Activated T-helper 1 cell treated with anti-CD3 and anti-CD28 coated beads, Interleukin-12 subunit alpha, Interleukin-12 subunit beta, Interleukin-2, Interleukin-4 antibody, amounts not matched to agents 30 ng/mL and 10 ng/mL and 1 ng/mL, durations not matched to agents 14 hours and 24 hours and 36 hours (primary cell): ENCODE measurements at regions of chr7 and their contacts with region 1.

Region 1: GRCh38 chr7:40134428-40135316 is at the starts of genes MPLKIP and SUGCT:
- DNase-seq: peak; percentile 80
- H3K4me3 Mint-ChIP-seq: peak within 1 kb of the TSS; percentile 91
- H3K27ac Mint-ChIP-seq: peak within 1 kb of the TSS; percentile 96
- H3K4me1 Mint-ChIP-seq: peaks cover 19% of the 10 kb centered on the region
- H3K27me3 Mint-ChIP-seq: peaks cover 13% of the 10 kb centered on the region
- total RNA-seq, gene MPLKIP: 36.0 and 36.3 TPM in 2 replicates
- total RNA-seq, gene SUGCT: 0.93 TPM in 1 of 2 replicates, not detected in the other

Region 2: GRCh38 chr7:38178004-38178694 is 1956.5 kb before region 1 on chr7 and contains the start of gene STARD3NL:
- intact Hi-C with region 1: loop called (anchors 10 kb)
- DNase-seq: peak; percentile 90
- H3K4me3 Mint-ChIP-seq: peak within 1 kb of the TSS; percentile 94
- H3K27ac Mint-ChIP-seq: peak within 1 kb of the TSS; percentile 87
- H3K4me1 Mint-ChIP-seq: peaks cover 46% of the 10 kb centered on the region
- H3K27me3 Mint-ChIP-seq: no peaks in the 10 kb centered on the region
- total RNA-seq, gene STARD3NL: 28.5 and 31.5 TPM in 2 replicates

Region 3: DNA sequence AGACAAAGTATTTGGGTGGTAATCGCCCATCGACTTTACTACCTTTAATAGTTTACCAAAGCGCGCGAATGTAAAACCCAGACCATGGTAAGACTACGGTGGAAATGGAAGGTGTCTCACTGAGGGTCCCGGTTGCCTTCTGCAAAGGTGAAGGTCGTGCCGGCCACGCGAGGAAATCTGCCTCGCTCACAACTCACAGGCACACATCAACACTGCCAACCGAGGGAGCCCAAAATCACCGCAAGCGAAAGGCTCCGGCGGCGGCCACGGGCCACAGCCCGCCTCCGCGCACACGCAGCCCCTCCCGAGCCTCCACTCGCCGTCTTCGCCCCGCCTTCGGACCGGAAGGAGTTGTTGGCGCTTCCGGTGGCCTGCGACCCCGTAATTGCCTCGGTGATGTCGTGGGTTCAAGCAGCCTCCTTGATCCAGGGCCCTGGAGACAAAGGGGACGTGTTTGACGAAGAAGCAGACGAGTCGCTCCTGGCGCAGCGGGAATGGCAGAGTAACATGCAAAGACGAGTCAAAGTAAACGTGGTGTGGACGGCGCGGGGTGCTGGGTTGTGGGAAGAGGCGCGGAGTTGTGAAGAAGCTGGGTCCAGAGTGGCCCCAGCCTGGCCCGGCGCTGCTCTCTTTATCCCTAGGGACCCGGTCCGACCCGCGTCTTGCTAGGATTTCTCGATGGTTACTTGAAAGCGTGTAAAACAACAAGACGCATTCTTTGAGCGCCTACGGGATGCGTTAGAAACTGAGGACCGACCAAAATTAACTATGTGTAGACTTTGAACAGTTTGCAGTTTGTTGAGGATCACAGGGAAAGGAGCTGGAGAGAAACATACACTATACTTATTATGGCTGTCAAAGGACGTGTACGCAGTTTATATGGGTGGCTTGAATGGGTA is 568.4 kb before region 1 on chr7 and contains the start of gene YAE1:
- intact Hi-C with region 1: loop called (anchors 2 kb)
- DNase-seq: peak; percentile 73
- H3K4me3 Mint-ChIP-seq: peak within 1 kb of the TSS; percentile 99
- H3K27ac Mint-ChIP-seq: peak within 1 kb of the TSS; percentile 91
- H3K4me1 Mint-ChIP-seq: peaks cover 21% of the 10 kb centered on the region
- H3K27me3 Mint-ChIP-seq: peaks cover 9% of the 10 kb centered on the region
- total RNA-seq, gene YAE1: 10.4 and 12.1 TPM in 2 replicates

Region 4: GRCh38 chr7:39623018-39623731 is 511.5 kb before region 1 on chr7 and contains the start of gene RALA:
- intact Hi-C with region 1: loop called (anchors 1 kb)
- DNase-seq: peak; percentile 87
- H3K4me3 Mint-ChIP-seq: peak within 1 kb of the TSS; percentile 95
- H3K27ac Mint-ChIP-seq: peak within 1 kb of the TSS; percentile 97
- H3K4me1 Mint-ChIP-seq: peaks cover 52% of the 10 kb centered on the region
- H3K27me3 Mint-ChIP-seq: peaks cover 7% of the 10 kb centered on the region
- total RNA-seq, gene RALA: 38.8 and 43.4 TPM in 2 replicates

Region 5: DNA sequence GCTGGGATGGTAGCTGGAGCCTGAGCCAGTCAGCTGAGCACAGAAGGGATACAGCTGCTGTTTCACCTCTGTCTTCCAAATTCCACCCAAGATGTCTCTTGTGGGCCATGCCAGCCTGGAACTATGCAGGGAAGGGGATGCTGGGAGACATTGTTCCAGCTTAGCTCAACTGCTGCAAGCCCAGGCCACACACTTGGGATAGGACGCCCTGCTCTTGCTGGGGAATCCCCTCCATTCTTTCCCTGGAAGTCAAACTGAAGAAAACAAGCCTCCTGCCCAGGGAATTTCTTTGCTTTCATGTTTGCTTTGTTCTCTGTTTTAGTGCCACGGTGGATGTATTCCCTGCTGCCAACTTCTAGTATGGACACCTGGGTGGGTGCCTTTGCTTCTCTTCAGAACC is 239.8 kb before region 1 on chr7:
- intact Hi-C with region 1: loop called (anchors 2 kb)
- DNase-seq: no peak
- H3K4me3 Mint-ChIP-seq: no peak overlapping the region
- H3K27ac Mint-ChIP-seq: no peak overlapping the region
- H3K4me1 Mint-ChIP-seq: no peaks in the 10 kb centered on the region
- H3K27me3 Mint-ChIP-seq: peaks cover 4% of the 10 kb centered on the region